ENCODE measurements at regions of chr2 and their contacts with region 1.

Region 1: GRCh38 chr2:101188683-101189405 is 37.7 kb upstream of the TBC1D8 start:
- DNase-seq: no peak
- H3K4me3 ChIP-seq: no peak overlapping the region
- H3K27ac ChIP-seq: no peak overlapping the region
- H3K27me3 ChIP-seq: peaks cover 26% of the 10 kb centered on the region
- CTCF ChIP-seq: peak; percentile 86

Region 2: DNA sequence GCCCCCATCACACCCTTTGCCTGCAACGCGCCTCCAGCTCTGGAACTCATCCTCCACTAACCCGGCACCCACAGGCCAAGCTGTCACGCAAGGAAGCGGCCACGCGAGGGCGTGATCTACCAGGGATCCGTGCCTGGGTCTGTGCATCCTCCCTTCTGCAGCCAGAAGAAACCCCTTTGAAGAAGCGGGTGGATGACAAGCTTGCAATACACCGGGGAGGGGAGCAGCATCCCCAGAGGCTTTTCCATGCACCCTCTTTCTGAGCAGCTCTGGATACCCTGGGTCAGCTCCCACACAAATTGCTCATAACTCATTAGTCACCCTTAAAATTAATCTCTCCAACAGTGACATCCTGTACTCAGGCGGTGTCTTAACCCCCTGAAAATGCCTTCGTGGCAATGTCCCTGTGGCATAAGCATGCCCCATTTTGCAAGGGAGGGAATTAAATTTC is 578.4 kb before region 1 on chr2:
- CTCF ChIA-PET with region 1: interaction called, 11 read pairs
- POLR2A ChIA-PET with region 1: no interaction called
- DNase-seq: peak; percentile 15
- H3K4me3 ChIP-seq: no peak overlapping the region
- H3K27ac ChIP-seq: no peak overlapping the region
- H3K27me3 ChIP-seq: peaks cover 4% of the 10 kb centered on the region
- CTCF ChIP-seq: peak; percentile 74

Region 3: GRCh38 chr2:101012706-101013181 is 176.1 kb before region 1 on chr2:
- CTCF ChIA-PET with region 1: interaction called, 18 read pairs
- POLR2A ChIA-PET with region 1: interaction called, 5 read pairs
- DNase-seq: no peak
- H3K4me3 ChIP-seq: no peak overlapping the region
- H3K27ac ChIP-seq: no peak overlapping the region
- H3K27me3 ChIP-seq: no peaks in the 10 kb centered on the region
- CTCF ChIP-seq: peak; percentile 83

Region 4: DNA sequence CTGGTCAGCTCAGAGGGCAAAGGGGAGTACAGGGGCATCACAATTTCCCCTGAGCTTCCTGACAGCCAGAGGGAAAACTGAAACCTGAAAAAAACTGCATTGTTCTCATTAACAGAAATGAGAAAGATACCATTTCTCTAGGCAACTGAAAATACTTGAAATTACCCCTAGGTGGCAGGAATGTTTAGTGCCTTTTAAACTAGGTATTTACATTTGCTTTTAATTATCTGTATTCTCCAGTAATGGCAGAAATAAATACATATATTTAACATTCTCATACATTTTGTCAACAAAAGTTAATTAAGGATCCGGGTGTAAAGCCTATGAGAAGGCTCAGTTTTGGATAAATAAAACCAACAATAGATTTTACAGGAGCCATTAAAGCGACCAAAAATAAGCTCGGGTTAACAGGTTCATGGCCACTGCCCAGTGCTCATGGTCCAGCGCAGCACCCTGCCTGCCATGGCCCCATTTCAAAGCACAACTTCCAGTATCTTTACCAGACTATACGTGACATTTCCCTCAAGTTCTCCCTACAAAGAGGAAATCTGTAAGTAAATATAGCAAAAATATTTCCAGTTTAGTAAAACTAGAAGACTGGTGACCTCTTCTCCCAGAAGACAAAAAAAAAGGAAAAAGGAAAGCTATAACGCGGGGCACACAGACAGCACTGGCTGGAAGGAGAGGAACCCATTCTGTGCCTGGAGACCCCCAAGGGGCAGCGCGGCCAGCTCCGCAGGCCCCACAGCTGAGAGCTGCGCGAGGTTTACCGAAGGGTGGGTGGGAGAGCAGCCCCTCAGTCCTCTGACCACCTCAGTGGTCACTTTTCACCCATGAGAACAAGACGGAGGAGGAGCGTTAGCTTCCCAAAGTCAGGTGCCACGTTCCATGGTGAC is 152.0 kb before region 1 on chr2:
- CTCF ChIA-PET with region 1: interaction called, 34 read pairs
- POLR2A ChIA-PET with region 1: no interaction called
- DNase-seq: no peak
- H3K4me3 ChIP-seq: no peak overlapping the region
- H3K27ac ChIP-seq: no peak overlapping the region
- H3K27me3 ChIP-seq: no peaks in the 10 kb centered on the region
- CTCF ChIP-seq: peak; percentile 68

Region 5: DNA sequence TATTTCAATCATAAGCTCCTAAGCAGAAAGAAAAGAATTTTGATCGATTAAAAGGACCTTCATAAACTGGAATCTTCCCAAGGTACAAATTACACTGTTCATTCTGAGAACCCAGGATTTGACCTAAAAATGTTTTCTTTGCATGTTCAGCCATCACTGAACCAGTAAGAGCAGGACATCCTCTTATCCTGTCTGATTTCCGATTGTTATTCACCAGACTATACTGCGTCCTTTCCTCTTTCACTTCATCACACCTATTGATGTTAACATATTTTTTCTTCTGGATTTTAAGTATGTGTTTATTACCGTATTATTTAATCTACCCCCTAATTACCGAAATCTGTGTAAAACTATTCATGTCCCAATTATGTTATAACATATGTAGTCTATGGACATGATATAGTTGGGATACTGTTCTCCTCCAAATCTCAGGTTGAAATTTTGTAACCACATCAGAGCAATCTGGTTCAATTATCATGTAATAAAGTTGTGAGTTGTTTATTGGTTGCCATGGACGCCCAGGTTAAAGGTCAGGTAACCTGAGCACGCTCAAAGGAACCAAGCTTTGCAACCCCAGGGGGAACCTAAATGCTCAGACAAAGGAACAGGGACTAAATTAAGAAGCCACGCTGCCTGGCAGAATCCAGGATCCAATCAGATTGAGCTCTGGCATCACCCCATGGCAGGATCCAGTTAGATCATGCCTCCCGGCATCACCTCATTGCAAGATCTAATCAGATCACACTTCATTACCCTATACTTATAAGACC is 26.1 kb before region 1 on chr2:
- CTCF ChIA-PET with region 1: interaction called, 10 read pairs
- POLR2A ChIA-PET with region 1: no interaction called
- DNase-seq: no peak
- H3K4me3 ChIP-seq: no peak overlapping the region
- H3K27ac ChIP-seq: no peak overlapping the region
- H3K27me3 ChIP-seq: peaks cover 3% of the 10 kb centered on the region
- CTCF ChIP-seq: no peak

Region 6: GRCh38 chr2:101219246-101219645 is 30.4 kb after region 1 on chr2:
- CTCF ChIA-PET with region 1: interaction called, 14 read pairs
- POLR2A ChIA-PET with region 1: no interaction called
- DNase-seq: no peak
- H3K4me3 ChIP-seq: no peak overlapping the region
- H3K27ac ChIP-seq: no peak overlapping the region
- H3K27me3 ChIP-seq: peaks cover 5% of the 10 kb centered on the region
- CTCF ChIP-seq: no peak

Region 7: DNA sequence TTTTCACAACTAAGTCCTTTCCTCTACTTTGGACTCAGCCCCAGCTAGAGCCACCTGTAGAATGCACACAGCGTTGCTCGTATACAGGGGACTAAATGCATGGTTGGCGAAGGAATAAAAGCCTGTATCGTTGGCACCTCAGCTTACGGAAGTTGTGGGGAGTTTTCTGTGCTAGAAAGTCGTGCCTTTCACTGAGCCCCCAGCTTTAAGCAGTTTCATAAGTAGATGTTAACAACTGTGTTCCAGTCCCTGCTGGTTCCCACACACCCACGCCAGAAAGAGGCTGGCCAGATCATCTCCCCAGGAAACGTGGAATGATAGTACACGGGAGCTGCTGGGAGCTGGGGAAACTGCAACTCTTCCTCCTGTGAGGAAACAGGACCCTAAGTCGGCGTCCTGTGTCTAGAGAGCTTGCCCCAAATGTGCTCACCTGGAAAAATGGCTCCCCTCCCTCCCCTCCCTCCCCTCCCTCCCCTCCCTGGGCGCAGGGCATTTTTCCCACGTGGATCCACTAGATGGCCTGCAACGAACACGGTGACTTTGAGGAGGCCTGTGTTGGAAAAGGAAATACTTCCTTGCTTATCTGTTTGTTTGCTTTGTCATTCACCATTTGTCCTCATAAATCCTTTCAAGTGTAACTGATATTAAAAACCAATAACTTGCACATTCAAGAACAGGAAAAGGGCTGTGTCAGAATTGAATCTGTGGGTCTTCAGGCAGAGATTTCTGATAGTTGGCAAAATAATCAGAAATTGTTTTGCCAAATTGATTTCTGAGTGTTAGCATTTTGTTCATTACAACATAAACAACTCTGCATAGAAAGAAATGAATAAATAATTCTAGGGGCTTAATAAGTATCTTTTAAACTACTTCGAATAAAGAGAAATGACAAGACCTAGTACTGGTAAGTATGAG is 330.0 kb after region 1 on chr2:
- CTCF ChIA-PET with region 1: no interaction called
- POLR2A ChIA-PET with region 1: no interaction called
- DNase-seq: no peak
- H3K4me3 ChIP-seq: no peak overlapping the region
- H3K27ac ChIP-seq: peak overlapping the region; percentile 66
- H3K27me3 ChIP-seq: no peaks in the 10 kb centered on the region
- CTCF ChIP-seq: peak; percentile 43